HAP-1 (cell line): ENCODE measurements at regions of chr1 and their contacts with region 1.

Region 1: DNA sequence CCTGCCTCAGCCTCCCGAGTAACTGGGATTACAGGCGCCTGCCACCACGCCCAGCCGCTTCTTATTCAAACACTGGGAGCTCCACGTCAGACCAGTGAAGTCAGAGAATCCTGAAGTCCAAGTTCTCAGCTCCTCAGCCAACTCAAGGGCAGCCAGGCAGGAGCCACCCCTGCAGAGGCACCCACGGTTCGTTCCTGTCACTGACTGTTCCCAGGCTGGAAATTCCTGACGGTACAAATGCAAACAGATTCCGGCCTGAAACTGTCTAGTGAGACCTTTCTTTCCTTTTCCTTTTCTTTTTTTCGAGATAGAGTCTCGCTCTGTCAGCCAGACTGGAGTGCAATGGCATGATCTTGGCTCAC is 11.7 kb downstream of the SLC35E2B start:
- DNase-seq: no peak
- H3K4me3 ChIP-seq: no peak overlapping the region
- H3K4me1 ChIP-seq: no peaks in the 10 kb centered on the region
- H3K27me3 ChIP-seq: no peaks in the 10 kb centered on the region

Region 2: GRCh38 chr1:1748686-1749321 is 67.9 kb after region 1 on chr1:
- in situ Hi-C with region 1: loop called (anchors 10 kb)
- DNase-seq: peak; percentile 54 to 81
- H3K4me3 ChIP-seq: no peak overlapping the region
- H3K4me1 ChIP-seq: peaks cover 6% of the 10 kb centered on the region
- H3K27me3 ChIP-seq: no peaks in the 10 kb centered on the region

Region 3: DNA sequence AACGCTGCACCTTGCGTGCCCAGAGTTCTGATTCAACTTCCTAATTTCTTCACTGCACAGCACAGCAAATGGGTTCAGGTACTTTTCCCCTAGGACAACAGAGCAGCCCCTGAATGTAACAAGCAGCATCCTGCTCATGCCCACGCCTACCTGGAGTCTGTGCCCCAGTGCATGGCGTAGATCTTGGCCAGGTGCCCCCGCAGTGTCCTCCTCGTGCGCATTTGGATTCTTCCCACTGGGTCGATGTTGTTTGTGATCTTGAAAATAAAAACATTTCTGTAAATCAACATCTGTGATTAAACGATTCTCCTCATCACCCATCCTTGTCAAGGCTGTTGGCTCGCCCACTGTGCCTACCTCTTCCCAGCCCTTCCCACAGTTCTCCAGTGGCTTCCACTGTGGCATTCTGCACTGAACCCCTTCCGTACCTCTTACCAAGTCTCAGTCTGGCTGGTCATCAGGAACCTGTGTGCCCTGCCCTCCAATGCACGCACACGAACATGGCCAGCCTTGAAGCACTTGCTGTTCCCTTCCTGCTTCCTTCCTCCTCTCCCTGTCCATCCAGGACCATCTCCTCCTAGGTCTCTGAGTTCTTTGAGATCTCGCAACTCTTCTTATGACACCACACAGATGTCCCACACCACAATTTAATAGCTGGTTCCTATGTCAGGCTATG is 134.9 kb after region 1 on chr1:
- in situ Hi-C with region 1: no loop called
- DNase-seq: no peak
- H3K4me3 ChIP-seq: no peak overlapping the region
- H3K4me1 ChIP-seq: peaks cover 18% of the 10 kb centered on the region
- H3K27me3 ChIP-seq: no peaks in the 10 kb centered on the region